ENCODE measurements at regions of chr7 and their contacts with region 1.

Region 1: DNA sequence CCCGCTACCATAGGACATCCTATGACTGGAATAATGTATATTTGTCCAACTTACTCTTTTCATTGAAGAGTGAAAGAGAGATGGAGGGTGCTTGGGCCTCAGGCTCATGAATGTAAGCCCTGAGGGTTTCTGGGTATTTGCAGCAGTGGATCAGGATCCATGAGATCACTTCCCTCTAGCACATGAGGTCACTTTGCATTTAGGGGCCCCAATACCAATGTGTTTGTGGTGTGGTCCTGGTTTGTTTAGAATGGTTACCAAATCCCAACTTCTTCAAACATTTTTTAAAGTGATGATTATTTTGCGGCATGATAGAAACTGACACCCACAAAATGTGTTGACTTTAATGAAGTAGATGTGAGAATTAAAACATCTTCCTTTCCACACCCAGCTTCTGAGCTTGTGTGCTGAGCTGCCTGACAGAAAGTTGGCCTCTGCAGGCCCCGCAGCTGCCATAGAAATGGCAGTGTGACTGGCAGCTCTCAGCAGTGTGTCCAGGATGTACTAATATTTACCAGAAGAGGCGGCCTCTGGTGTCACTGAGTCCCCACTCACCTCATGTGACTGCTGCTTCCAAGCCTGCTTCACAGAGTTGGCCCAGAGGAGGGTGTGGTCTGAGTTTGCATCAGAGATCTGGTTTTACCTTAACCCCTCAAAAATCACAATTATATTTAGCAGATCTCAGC is 447.6 kb upstream of the NPVF start:
- DNase-seq: no peak

Region 2: GRCh38 chr7:25624833-25625232 is 51.1 kb before region 1 on chr7:
- intact Hi-C with region 1: no loop called
- DNase-seq: no peak

Region 3: GRCh38 chr7:25643770-25644394 is 32.0 kb before region 1 on chr7:
- intact Hi-C with region 1: no loop called
- DNase-seq: no peak

Region 4: DNA sequence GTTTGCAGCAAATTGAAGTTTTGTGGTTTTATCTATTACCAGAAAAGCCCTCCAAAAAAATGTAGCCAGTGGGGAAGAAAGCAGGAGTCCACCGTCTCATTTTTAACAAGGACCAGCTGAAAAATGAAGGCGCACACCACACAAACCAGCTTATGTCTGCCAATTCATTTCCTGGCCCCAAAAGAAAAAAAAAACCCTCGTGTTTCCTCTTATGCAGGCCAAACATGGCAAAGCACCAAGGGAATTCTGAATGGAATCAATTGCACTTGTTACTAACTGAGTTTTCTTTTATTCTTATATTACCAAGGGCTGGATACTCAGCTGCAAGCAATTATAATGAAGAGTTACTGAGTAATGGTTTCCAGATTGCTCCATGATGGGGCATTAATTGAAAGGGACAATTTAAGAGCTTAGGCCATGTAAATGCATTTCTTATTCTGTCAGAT is 19.3 kb before region 1 on chr7:
- intact Hi-C with region 1: loop called in 1 of 2 experiments (anchors 1 kb)
- DNase-seq: no peak

Region 5: DNA sequence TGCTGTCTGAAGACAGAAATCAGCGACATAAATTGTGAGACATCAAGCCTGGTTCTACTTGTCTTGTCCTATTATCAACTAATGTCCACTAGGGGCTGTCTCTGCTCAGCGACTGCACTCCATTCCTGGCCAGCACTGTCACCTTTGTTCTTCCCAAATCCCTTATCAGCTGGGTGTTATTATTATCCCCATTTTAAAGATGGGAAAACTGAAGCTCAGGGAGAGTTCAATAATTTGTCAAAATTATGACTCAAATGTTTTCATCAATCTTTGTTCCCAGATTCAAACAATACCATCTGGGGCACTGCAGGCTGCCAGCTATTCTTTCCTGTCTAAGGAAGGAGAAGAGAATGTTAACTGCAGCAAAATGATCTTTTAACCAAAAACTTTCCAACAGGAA is 44.5 kb after region 1 on chr7:
- intact Hi-C with region 1: loop called in 1 of 2 experiments (anchors 1 kb)
- DNase-seq: no peak

Region 6: DNA sequence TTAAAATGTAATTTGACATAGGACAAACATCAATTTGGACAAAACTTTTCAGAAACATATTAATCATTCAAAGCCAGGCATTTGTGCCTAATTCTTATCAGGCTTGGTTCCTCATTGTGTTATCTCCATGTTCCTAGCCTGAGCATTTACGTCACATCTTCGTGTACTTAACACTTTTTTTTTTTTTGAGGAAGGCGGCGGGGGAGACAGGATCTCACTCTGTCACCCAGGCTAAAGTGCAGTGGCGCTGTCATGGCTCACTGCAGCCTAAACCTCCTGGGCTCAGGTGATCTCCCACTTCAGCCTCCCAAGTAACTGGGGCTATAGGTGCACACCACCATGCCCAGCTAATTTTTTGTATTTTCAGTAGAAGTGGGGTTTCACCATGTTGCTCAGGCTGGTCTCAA is 504.9 kb after region 1 on chr7:
- intact Hi-C with region 1: no loop called
- DNase-seq: no peak

Measured in posterior vena cava (tissue), 2 donors.